ENCODE measurements at regions of chr11 and their contacts with region 1.

Region 1: GRCh38 chr11:65700391-65700790 is 11.7 kb upstream of the KAT5 start:
- DNase-seq: no peak
- H3K4me3 ChIP-seq: no peak overlapping the region
- H3K27ac ChIP-seq: no peak overlapping the region
- H3K4me1 ChIP-seq: peaks cover 4% of the 10 kb centered on the region
- H3K27me3 ChIP-seq: no peaks in the 10 kb centered on the region
- CTCF ChIP-seq: no peak
- POLR2A ChIP-seq: no peak

Region 2: GRCh38 chr11:65988791-65989592 is 288.6 kb after region 1 on chr11:
- intact Hi-C with region 1: loop called (anchors 10 kb)
- DNase-seq: peak; percentile 93
- H3K4me3 ChIP-seq: no peak overlapping the region
- H3K27ac ChIP-seq: no peak overlapping the region
- H3K4me1 ChIP-seq: no peaks in the 10 kb centered on the region
- H3K27me3 ChIP-seq: no peaks in the 10 kb centered on the region
- CTCF ChIP-seq: peak; percentile 45 to 99 (median 93)
- POLR2A ChIP-seq: no peak